PC-3 (cell line): ENCODE measurements at regions of chr4 and their contacts with region 1.

Region 1: GRCh38 chr4:24472514-24473308 is 111.6 kb downstream of the DHX15 start:
- DNase-seq: peak; percentile 65
- ATAC-seq: peak; percentile 78
- H3K4me3 ChIP-seq: peak overlapping the region; percentile 81
- H3K27ac ChIP-seq: no peak overlapping the region
- H3K4me1 ChIP-seq: peaks cover 7% of the 10 kb centered on the region; the same call in 1 of the 2 replicates
- H3K27me3 ChIP-seq: peaks cover 17% of the 10 kb centered on the region
- CTCF ChIP-seq: peak; percentile 63

Region 2: DNA sequence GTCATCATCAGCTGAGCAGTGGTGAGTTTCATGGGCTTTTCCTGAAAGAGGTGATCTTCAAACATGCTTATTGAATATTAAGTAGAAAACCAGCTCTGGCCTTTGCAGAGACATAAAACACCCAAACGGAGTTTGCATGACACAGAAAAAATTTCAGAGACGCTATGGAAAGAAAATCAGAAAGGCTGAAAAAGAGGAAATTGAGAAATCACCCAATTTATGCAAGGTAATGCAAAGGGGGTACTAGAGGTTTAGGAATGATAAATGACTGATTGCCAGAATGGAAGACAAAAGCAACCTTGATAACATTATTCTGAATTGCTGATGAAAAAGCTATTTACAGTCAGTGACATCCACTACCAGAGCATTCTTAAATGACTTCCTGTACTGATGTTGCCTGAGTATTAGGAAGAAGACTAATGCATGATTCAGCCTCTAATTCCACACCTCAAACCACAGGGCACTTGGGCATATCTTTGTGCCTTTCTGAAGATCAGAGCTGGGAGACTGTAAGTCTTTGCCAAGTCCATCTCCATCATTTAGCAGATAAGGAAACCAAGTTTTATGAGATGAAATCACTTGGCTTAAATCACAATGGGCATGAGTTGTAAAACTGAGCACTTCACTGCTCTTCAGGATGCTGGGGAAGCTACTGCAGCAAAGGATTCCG is 1148.6 kb before region 1 on chr4:
- CTCF ChIA-PET with region 1: no interaction called
- POLR2A ChIA-PET with region 1: no interaction called
- intact Hi-C with region 1: no loop called
- DNase-seq: peak; percentile 74
- ATAC-seq: peak; percentile 74
- H3K4me3 ChIP-seq: no peak overlapping the region
- H3K27ac ChIP-seq: peak overlapping the region; percentile 53
- H3K4me1 ChIP-seq: peaks cover 20% of the 10 kb centered on the region
- H3K27me3 ChIP-seq: no peaks in the 10 kb centered on the region
- CTCF ChIP-seq: no peak

Region 3: GRCh38 chr4:24912252-24913118 is 439.8 kb after region 1 on chr4 and contains the start of gene CCDC149:
- CTCF ChIA-PET with region 1: no interaction called
- POLR2A ChIA-PET with region 1: no interaction called
- intact Hi-C with region 1: loop called (anchors 10 kb)
- DNase-seq: peak; percentile 79
- ATAC-seq: peak; percentile 89
- H3K4me3 ChIP-seq: peak within 1 kb of the TSS; percentile 68
- H3K27ac ChIP-seq: peak within 1 kb of the TSS; percentile 50
- H3K4me1 ChIP-seq: peaks cover 11% of the 10 kb centered on the region
- H3K27me3 ChIP-seq: no peaks in the 10 kb centered on the region
- CTCF ChIP-seq: no peak
- total RNA-seq, gene CCDC149: 5.9 and 7.9 TPM in 2 replicates

Region 4: GRCh38 chr4:24973733-24974601 is 501.3 kb after region 1 on chr4:
- CTCF ChIA-PET with region 1: interaction called, 10 read pairs
- POLR2A ChIA-PET with region 1: no interaction called
- intact Hi-C with region 1: no loop called
- DNase-seq: peak; percentile 51
- ATAC-seq: peak; percentile 67
- H3K4me3 ChIP-seq: peak overlapping the region; percentile 44; the same call in 1 of the 2 replicates
- H3K27ac ChIP-seq: peak overlapping the region; percentile 81
- H3K4me1 ChIP-seq: peaks cover 28% of the 10 kb centered on the region
- H3K27me3 ChIP-seq: no peaks in the 10 kb centered on the region
- CTCF ChIP-seq: no peak

Region 5: DNA sequence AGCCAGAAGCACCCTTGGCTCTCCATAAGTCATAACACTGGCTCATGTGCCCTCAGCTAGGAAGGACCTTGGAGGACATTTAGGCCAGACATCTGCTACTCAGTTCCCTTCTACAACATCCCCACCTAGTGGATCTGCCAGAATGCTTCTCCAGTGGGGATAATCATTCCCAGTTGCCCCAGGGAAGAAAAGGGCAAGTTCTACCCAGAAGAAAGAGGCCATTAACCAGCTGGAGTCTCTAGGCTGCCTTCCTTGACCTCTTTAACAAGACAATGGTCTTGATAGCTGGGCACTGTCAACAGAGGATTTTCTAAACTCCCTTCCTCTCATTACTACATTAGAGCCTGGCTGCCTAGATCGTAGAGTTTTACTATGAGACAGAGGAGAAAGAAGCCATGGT is 516.1 kb after region 1 on chr4:
- CTCF ChIA-PET with region 1: no interaction called
- POLR2A ChIA-PET with region 1: no interaction called
- intact Hi-C with region 1: loop called (anchors 1 kb)
- DNase-seq: peak; percentile 65
- ATAC-seq: peak; percentile 92
- H3K4me3 ChIP-seq: no peak overlapping the region
- H3K27ac ChIP-seq: no peak overlapping the region
- H3K4me1 ChIP-seq: no peaks in the 10 kb centered on the region
- H3K27me3 ChIP-seq: no peaks in the 10 kb centered on the region
- CTCF ChIP-seq: peak; percentile 66

Region 6: DNA sequence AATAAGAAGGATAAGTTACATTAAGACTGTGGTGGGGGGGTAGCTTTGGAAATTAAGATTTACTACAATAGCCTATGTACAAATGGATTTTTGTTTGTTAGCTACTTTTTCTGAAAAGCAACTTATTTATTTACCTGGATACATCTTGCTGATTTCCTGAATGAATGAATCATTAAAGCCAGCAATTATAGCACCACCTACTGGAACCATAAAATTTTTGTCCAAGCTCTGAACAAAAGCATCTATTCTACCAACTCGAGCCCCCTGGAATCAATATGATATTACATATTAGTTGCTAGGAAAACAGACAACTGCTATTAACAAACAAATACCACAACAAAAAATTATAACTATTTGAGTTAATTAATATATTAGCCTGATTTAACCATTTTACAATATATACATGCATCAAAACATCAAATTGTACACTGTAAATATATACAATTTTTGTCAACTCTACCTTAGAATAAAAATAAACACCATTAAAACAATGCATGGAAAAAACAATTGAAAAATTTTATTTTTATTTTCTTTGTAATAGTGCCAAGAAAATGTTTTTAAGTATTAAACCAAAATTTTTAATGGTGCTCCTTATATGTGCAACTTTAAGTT is 672.3 kb after region 1 on chr4:
- CTCF ChIA-PET with region 1: no interaction called
- POLR2A ChIA-PET with region 1: interaction called, 8 read pairs
- intact Hi-C with region 1: loop called (anchors 10 kb)
- DNase-seq: peak; percentile 61
- ATAC-seq: no peak
- H3K4me3 ChIP-seq: no peak overlapping the region
- H3K27ac ChIP-seq: no peak overlapping the region
- H3K4me1 ChIP-seq: no peaks in the 10 kb centered on the region
- H3K27me3 ChIP-seq: no peaks in the 10 kb centered on the region
- CTCF ChIP-seq: peak; percentile 73